CD8-positive, alpha-beta memory T cell (primary cell): ENCODE measurements at regions of chr7 and their contacts with region 1.

Region 1: GRCh38 chr7:141014524-141015395 is at the start of gene MRPS33:
- DNase-seq: peak; percentile 88 to 97 (median 94)
- H3K4me3 ChIP-seq: peak within 1 kb of the TSS; percentile 78
- H3K4me3 Mint-ChIP-seq: peak within 1 kb of the TSS; percentile 95 to 100 (median 99)
- H3K27ac ChIP-seq: peak within 1 kb of the TSS; percentile 97
- H3K27ac Mint-ChIP-seq: peak within 1 kb of the TSS; percentile 99 to 100 (median 100)
- H3K4me1 ChIP-seq: peaks cover 28% of the 10 kb centered on the region
- H3K4me1 Mint-ChIP-seq: peaks cover 26 to 41% (median 41%) of the 10 kb centered on the region in 3 donors
- H3K27me3 ChIP-seq: no peaks in the 10 kb centered on the region
- H3K27me3 Mint-ChIP-seq: peaks cover 10 to 13% of the 10 kb centered on the region in 2 donors
- total RNA-seq, gene MRPS33: 113 to 114 TPM

Region 2: DNA sequence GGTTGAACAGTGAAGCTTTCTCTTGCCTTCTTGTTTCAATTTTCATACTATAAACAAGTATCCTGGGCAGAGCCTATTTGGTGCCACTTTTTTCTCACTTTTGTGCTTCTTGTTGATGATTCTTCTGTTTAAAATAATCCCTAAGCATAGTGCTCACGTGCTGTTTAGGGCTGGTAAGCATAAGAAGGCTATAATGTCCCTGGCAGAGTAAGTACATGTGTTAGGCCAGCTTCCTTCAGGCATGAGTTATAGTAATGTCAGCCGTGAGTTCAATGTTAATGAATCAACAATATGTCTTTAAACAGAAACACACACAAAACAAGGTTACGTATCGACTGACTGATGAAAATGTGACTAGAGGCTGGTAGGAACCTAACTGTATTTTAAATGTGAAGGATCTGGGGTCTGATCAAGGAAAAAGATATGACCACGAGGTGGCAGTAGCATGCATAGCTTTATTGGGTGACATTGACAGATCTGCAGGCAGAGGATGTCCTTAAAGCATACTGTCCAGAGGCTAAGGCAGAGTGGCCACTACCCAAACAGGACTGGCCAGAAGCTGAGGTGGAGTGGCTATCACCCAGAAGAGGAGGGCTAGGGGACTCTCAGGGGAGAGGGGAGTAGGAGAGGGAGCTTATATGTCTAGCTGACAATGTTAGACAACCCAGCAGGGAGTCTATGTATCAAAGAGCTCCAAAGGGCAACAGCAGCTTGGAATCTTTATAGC is 203.8 kb before region 1 on chr7:
- CTCF ChIA-PET with region 1: interaction called, 86 read pairs
- POLR2A ChIA-PET with region 1: interaction called, 4 read pairs
- DNase-seq: peak; percentile 24 to 68 (median 52)
- H3K4me3 ChIP-seq: no peak overlapping the region
- H3K4me3 Mint-ChIP-seq: no peak overlapping the region
- H3K27ac ChIP-seq: no peak overlapping the region
- H3K27ac Mint-ChIP-seq: peak overlapping the region in 2 of 8 donors; percentile 48 to 66
- H3K4me1 ChIP-seq: no peaks in the 10 kb centered on the region
- H3K4me1 Mint-ChIP-seq: peaks cover 0 to 6% (median 4%) of the 10 kb centered on the region in 3 donors
- H3K27me3 ChIP-seq: no peaks in the 10 kb centered on the region
- H3K27me3 Mint-ChIP-seq: no peaks in the 10 kb centered on the region

Region 3: GRCh38 chr7:140924019-140924820 is 90.5 kb before region 1 on chr7:
- CTCF ChIA-PET with region 1: interaction called, 12 read pairs
- POLR2A ChIA-PET with region 1: interaction called, 13 read pairs
- DNase-seq: peak; percentile 68 to 90 (median 86)
- H3K4me3 ChIP-seq: peak overlapping the region; percentile 87
- H3K4me3 Mint-ChIP-seq: no peak overlapping the region
- H3K27ac ChIP-seq: peak overlapping the region; percentile 98
- H3K27ac Mint-ChIP-seq: no peak overlapping the region
- H3K4me1 ChIP-seq: peaks cover 26% of the 10 kb centered on the region
- H3K4me1 Mint-ChIP-seq: peaks cover 7 to 37% (median 21%) of the 10 kb centered on the region in 3 donors
- H3K27me3 ChIP-seq: no peaks in the 10 kb centered on the region
- H3K27me3 Mint-ChIP-seq: peaks cover 3 to 4% of the 10 kb centered on the region in 2 donors